ENCODE measurements at regions of chr2 and their contacts with region 1.

Region 1: GRCh38 chr2:227739351-227739750 is 6.3 kb upstream of the SCYGR8 start:
- DNase-seq: peak in 1 of 2 experiments; percentile 33
- H3K4me3 ChIP-seq: no peak overlapping the region
- H3K4me3 Mint-ChIP-seq: no peak overlapping the region
- H3K27ac Mint-ChIP-seq: no peak overlapping the region
- H3K4me1 ChIP-seq: no peaks in the 10 kb centered on the region
- H3K4me1 Mint-ChIP-seq: peaks cover 7% of the 10 kb centered on the region
- H3K27me3 ChIP-seq: no peaks in the 10 kb centered on the region
- H3K27me3 Mint-ChIP-seq: no peaks in the 10 kb centered on the region
- CTCF ChIP-seq: no peak

Region 2: GRCh38 chr2:227423656-227424499 is 315.5 kb before region 1 on chr2:
- CTCF ChIA-PET with region 1: no interaction called
- POLR2A ChIA-PET with region 1: no interaction called
- intact Hi-C with region 1: no loop called
- DNase-seq: no peak
- H3K4me3 ChIP-seq: no peak overlapping the region
- H3K4me3 Mint-ChIP-seq: no peak overlapping the region
- H3K27ac Mint-ChIP-seq: no peak overlapping the region
- H3K4me1 ChIP-seq: no peaks in the 10 kb centered on the region
- H3K4me1 Mint-ChIP-seq: no peaks in the 10 kb centered on the region
- H3K27me3 ChIP-seq: no peaks in the 10 kb centered on the region
- H3K27me3 Mint-ChIP-seq: no peaks in the 10 kb centered on the region
- CTCF ChIP-seq: no peak

Region 3: DNA sequence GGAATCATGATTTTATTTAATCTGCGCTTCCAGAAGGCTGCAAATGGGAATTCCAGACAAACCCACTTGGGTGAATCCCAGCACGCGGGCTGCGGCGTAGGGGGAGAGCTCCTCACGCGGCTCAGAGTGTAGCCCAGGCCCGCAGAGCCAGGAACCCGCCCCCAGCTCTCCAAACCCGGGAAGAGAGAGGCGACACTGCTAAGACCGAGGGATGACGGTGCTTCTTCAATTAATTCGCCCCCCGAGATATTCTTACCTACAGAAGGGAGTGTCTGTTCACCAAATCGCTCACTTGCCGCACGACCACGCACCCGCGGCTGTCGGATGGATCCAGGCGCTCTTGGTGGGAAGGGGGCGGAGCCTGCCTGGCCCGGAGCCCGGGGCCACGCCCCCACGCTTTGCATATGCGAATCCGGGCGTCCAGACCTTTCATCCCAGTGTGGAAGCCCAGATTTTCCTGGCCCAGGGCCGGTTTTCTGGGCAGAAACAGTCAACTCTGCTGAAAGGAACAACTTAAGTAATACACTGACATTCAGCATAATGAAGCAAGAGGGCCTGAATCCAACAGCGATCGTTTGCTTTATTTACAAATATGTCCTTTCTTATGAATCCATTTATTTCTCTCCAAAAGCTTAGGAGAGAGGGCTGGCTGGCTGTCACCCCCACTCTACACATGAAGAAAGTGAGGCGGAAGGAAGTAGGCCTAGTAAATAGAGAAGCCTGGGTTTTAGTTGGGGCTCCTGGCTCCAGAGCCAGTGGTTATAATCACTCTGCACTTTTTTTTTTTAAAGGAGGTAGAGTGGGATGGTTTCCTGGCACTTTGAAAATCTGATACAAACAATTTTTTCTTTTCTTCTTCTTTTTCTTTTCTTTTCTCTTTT is 21.4 kb before region 1 on chr2 and contains the start of gene SLC19A3:
- CTCF ChIA-PET with region 1: no interaction called
- POLR2A ChIA-PET with region 1: no interaction called
- intact Hi-C with region 1: loop called (anchors 2 kb)
- DNase-seq: peak; percentile 87 to 90
- H3K4me3 ChIP-seq: peak within 1 kb of the TSS; percentile 43
- H3K4me3 Mint-ChIP-seq: peak within 1 kb of the TSS; percentile 74
- H3K27ac Mint-ChIP-seq: peak within 1 kb of the TSS; percentile 59
- H3K4me1 ChIP-seq: peaks cover 34% of the 10 kb centered on the region
- H3K4me1 Mint-ChIP-seq: peaks cover 20% of the 10 kb centered on the region
- H3K27me3 ChIP-seq: no peaks in the 10 kb centered on the region
- H3K27me3 Mint-ChIP-seq: no peaks in the 10 kb centered on the region
- CTCF ChIP-seq: no peak
- total RNA-seq, gene SLC19A3: 88.2 and 98.5 TPM in 2 replicates